PC-3 (cell line): ENCODE measurements at regions of chr5 and their contacts with region 1.

Region 1: DNA sequence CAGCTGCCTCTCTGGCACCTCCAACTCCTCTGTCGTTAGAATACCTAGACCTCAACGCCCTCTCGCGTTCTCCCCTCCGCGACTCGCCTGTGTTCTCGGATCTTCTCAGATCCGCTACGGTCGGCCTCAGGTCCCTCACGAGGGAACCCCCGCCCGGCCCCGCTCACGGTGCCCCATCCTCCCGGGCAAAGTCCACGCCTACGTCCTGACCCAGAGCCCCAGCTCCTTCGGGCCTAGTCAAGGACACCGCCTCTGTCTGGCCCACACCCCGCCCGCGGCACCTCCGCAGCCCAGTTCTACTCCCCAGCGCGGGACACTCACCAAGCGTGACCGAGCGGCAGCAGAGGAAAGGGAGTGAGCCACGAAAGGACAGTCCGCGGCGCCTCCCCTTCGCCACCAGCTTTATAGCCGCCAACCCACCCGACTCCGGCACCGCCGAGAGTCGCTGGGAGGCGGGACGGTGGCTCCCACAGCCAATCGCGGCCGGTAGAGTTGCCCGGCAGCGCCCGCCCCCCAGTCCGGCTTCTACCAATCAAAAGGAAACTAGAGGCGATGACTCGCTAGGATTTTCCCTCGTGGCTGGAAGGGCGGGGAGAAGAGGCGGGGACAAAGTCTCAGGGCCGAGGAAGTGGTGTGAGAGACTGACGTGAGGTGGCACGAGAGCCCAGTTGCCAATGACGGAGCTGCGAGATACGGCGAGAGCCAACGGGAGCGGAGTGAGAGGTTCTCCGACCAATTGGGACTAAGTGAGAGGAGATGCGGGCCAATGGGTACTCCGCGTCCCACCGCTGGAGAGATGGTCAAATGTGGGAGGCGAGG is at the start of gene HMGCS1:
- DNase-seq: peak; percentile 99
- ATAC-seq: peak; percentile 90
- H3K4me3 ChIP-seq: peak within 1 kb of the TSS; percentile 93
- H3K27ac ChIP-seq: peak within 1 kb of the TSS; percentile 89
- H3K4me1 ChIP-seq: peaks cover 64% of the 10 kb centered on the region
- H3K27me3 ChIP-seq: no peaks in the 10 kb centered on the region
- CTCF ChIP-seq: 0 out of 2 replicates have a peak, but pooled peaks have one; percentile 28
- total RNA-seq, gene HMGCS1: 31.4 and 39.7 TPM in 2 replicates

Region 2: GRCh38 chr5:42950440-42951292 is 362.6 kb before region 1 on chr5:
- CTCF ChIA-PET with region 1: no interaction called
- POLR2A ChIA-PET with region 1: no interaction called
- intact Hi-C with region 1: no loop called
- DNase-seq: peak; percentile 100
- ATAC-seq: peak; percentile 81
- H3K4me3 ChIP-seq: peak overlapping the region; percentile 64
- H3K27ac ChIP-seq: peak overlapping the region; percentile 94
- H3K4me1 ChIP-seq: peaks cover 30% of the 10 kb centered on the region
- H3K27me3 ChIP-seq: no peaks in the 10 kb centered on the region
- CTCF ChIP-seq: no peak

Region 3: GRCh38 chr5:43294226-43294625 is 19.0 kb before region 1 on chr5:
- CTCF ChIA-PET with region 1: no interaction called
- POLR2A ChIA-PET with region 1: no interaction called
- intact Hi-C with region 1: no loop called
- DNase-seq: peak; percentile 61
- ATAC-seq: no peak
- H3K4me3 ChIP-seq: no peak overlapping the region
- H3K27ac ChIP-seq: no peak overlapping the region
- H3K4me1 ChIP-seq: peaks cover 37% of the 10 kb centered on the region
- H3K27me3 ChIP-seq: no peaks in the 10 kb centered on the region
- CTCF ChIP-seq: no peak

Region 4: DNA sequence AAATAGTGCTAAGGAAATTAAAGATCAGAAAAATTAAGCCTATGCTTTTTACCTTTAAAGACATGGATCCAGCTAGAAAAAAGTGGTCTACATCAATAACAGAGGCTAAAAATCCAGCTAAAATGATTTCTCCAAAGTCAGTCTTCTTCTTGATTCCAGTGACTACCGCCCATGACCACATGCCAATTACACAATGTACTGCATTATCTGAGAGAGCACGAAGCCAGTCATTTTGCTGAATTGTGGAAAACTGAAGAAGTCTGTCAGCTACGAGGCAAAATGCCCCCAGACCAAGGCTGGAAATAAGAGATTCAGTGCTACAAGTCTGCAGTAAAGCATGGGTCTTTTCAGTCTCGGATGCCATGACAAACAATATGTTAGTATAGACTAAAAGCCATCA is 140.4 kb after region 1 on chr5:
- CTCF ChIA-PET with region 1: no interaction called
- POLR2A ChIA-PET with region 1: interaction called, 13 read pairs
- intact Hi-C with region 1: no loop called
- DNase-seq: no peak
- ATAC-seq: no peak
- H3K4me3 ChIP-seq: no peak overlapping the region
- H3K27ac ChIP-seq: no peak overlapping the region
- H3K4me1 ChIP-seq: no peaks in the 10 kb centered on the region
- H3K27me3 ChIP-seq: no peaks in the 10 kb centered on the region
- CTCF ChIP-seq: no peak